Natural killer cell (primary cell): ENCODE measurements at regions of chr16 and their contacts with region 1.

Region 1: GRCh38 chr16:52439171-52439701 is 107.7 kb downstream of the TOX3 start:
- DNase-seq: no peak
- ATAC-seq: no peak
- H3K4me3 ChIP-seq: no peak overlapping the region
- H3K4me3 Mint-ChIP-seq: no peak overlapping the region
- H3K27ac ChIP-seq: no peak overlapping the region
- H3K27ac Mint-ChIP-seq: no peak overlapping the region
- H3K4me1 ChIP-seq: no peaks in the 10 kb centered on the region
- H3K4me1 Mint-ChIP-seq: no peaks in the 10 kb centered on the region
- H3K27me3 ChIP-seq: no peaks in the 10 kb centered on the region
- H3K27me3 Mint-ChIP-seq: no peaks in the 10 kb centered on the region
- CTCF ChIP-seq: no peak

Region 2: DNA sequence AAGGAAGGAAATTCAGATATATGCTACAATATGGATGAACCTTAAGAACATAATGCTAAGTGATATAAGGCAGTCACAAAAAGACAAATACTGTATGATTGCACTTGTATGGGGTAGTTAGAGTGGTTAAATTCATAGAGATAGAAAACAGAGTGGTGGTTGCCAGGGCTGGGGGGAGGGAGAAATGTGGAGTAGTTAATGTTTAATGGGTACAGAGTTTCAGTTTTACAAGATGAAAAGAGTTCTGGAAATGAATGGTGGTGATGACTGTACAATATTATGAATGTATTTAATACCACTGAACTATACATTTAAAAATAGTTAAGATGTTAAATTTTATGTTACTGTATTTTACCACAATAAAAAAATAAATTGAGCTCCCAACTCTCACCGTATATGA is 50.2 kb before region 1 on chr16:
- intact Hi-C with region 1: loop called (anchors 5 kb)
- DNase-seq: no peak
- ATAC-seq: no peak
- H3K4me3 ChIP-seq: no peak overlapping the region
- H3K4me3 Mint-ChIP-seq: no peak overlapping the region
- H3K27ac ChIP-seq: no peak overlapping the region
- H3K27ac Mint-ChIP-seq: no peak overlapping the region
- H3K4me1 ChIP-seq: no peaks in the 10 kb centered on the region
- H3K4me1 Mint-ChIP-seq: no peaks in the 10 kb centered on the region
- H3K27me3 ChIP-seq: no peaks in the 10 kb centered on the region
- H3K27me3 Mint-ChIP-seq: no peaks in the 10 kb centered on the region
- CTCF ChIP-seq: no peak

Region 3: GRCh38 chr16:52469775-52470174 is 30.5 kb after region 1 on chr16:
- intact Hi-C with region 1: no loop called
- DNase-seq: no peak
- ATAC-seq: no peak
- H3K4me3 ChIP-seq: no peak overlapping the region
- H3K4me3 Mint-ChIP-seq: no peak overlapping the region
- H3K27ac ChIP-seq: no peak overlapping the region
- H3K27ac Mint-ChIP-seq: no peak overlapping the region
- H3K4me1 ChIP-seq: no peaks in the 10 kb centered on the region
- H3K4me1 Mint-ChIP-seq: no peaks in the 10 kb centered on the region
- H3K27me3 ChIP-seq: no peaks in the 10 kb centered on the region
- H3K27me3 Mint-ChIP-seq: no peaks in the 10 kb centered on the region
- CTCF ChIP-seq: no peak